PC-3 (cell line): ENCODE measurements at regions of chr11 and their contacts with region 1.

Region 1: DNA sequence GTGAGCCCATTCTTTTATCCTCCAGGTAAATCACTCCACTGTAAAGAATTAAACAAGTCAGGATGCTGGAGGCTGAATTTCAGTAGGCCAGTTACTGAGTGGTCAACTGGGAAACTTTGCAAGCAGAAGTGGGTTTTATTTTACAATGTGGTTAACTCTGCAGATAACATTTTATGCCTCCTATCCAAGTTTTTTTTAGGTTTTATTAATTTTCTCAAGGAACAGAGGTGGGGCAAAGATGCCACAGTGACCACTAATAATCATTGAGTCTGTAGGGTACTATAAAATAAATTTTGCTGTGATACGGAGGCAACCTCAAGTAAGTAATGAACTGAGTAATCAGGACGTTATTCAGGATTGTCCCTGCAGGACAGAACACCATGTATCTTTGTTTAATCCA is 599.9 kb downstream of the METTL15 start:
- DNase-seq: no peak
- ATAC-seq: peak; percentile 48
- H3K4me3 ChIP-seq: no peak overlapping the region
- H3K27ac ChIP-seq: no peak overlapping the region
- H3K4me1 ChIP-seq: peaks cover 42% of the 10 kb centered on the region
- H3K27me3 ChIP-seq: no peaks in the 10 kb centered on the region
- CTCF ChIP-seq: no peak

Region 2: DNA sequence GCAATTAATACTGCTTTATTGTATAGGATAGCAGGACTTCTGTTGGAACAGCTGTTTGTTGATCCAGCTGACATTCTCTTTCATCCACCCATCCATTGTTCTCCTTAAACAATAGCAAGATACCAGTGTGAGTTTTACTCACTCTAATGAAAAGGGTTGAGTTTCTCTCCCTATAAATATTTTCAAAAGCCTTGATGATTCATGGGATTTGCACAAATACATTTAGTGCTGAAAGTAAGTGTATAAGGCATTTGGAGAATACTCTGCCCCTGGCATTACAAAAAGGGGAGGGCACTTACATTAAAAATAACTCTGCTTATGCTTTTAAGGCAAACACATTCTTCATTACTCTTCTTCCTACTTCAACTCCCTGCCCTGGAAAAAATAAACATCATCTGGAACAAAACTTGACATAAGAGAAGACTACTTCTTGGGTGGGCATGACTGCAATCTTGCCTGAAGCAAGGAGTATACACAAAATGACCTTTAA is 35.0 kb after region 1 on chr11:
- CTCF ChIA-PET with region 1: no interaction called
- POLR2A ChIA-PET with region 1: no interaction called
- intact Hi-C with region 1: loop called (anchors 2 kb)
- DNase-seq: peak; percentile 63
- ATAC-seq: peak; percentile 89
- H3K4me3 ChIP-seq: no peak overlapping the region
- H3K27ac ChIP-seq: no peak overlapping the region
- H3K4me1 ChIP-seq: peaks cover 19% of the 10 kb centered on the region
- H3K27me3 ChIP-seq: no peaks in the 10 kb centered on the region
- CTCF ChIP-seq: no peak

Region 3: GRCh38 chr11:28858076-28858475 is 150.0 kb after region 1 on chr11:
- CTCF ChIA-PET with region 1: no interaction called
- POLR2A ChIA-PET with region 1: no interaction called
- intact Hi-C with region 1: no loop called
- DNase-seq: no peak
- ATAC-seq: no peak
- H3K4me3 ChIP-seq: no peak overlapping the region
- H3K27ac ChIP-seq: no peak overlapping the region
- H3K4me1 ChIP-seq: peaks cover 16% of the 10 kb centered on the region
- H3K27me3 ChIP-seq: no peaks in the 10 kb centered on the region
- CTCF ChIP-seq: no peak

Region 4: DNA sequence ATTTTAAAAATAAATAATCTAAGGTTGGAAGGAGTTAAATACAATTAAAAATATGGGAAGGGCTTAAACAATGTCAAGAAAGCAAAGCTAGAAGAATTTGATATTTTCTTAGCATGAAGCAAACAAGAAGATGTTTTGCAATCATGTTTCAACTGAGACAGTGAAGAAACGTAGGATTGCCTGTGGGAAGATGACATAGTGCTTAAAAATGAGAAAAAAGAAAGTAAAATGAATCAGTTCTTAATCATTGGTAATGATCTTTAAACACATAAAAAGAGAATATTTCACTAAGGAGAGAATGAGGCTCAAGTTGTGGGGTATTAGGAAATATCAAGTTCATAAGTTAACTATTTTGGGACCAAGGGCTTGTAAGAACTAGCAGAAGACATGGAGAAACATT is 255.1 kb after region 1 on chr11:
- CTCF ChIA-PET with region 1: no interaction called
- POLR2A ChIA-PET with region 1: no interaction called
- intact Hi-C with region 1: no loop called
- DNase-seq: peak; percentile 37
- ATAC-seq: no peak
- H3K4me3 ChIP-seq: no peak overlapping the region
- H3K27ac ChIP-seq: no peak overlapping the region
- H3K4me1 ChIP-seq: peaks cover 4% of the 10 kb centered on the region; the same call in 1 of the 2 replicates
- H3K27me3 ChIP-seq: no peaks in the 10 kb centered on the region
- CTCF ChIP-seq: no peak